ENCODE measurements at regions of chr10 and their contacts with region 1.

Region 1: DNA sequence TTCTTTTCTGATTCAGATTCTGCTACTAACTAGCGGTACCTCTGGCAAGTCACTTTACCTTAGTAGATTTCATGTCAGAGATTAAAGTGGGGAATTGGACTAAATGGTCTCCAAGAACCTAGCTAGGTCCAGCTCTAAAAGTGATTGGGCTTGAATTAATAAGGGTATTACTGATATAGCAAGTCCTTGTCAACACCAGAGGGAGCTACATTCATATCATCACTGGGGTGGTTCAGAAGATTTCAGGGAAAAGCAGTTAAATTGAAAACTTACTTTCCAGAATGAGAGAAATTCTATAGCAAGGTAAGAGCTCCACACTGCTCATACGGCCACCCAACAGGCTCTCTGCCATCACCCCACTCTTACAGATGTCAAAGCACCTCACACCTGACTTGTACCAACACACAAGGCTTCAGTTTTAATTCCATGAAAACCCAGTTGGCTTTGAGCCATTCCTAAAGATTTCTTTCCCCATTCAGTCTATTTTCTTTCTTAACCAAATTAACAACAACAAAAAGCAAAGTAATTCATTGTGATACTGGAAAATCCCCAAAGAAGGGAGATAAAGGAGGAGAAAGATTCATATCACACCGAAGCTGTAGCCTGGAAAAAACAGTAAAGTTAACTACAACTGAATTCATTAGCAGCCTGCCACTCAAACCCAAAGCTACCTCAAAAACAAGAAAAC is 38.0 kb upstream of the SPOCK2 start:
- DNase-seq: peak in 2 of 7 donors; percentile 16 to 30
- H3K4me3 ChIP-seq: no peak overlapping the region
- H3K27ac ChIP-seq: no peak overlapping the region
- H3K4me1 ChIP-seq: peaks cover 4 to 17% of the 10 kb centered on the region in 2 donors
- H3K27me3 ChIP-seq: no peaks in the 10 kb centered on the region
- CTCF ChIP-seq: peak; percentile 18 to 67 (median 54)
- POLR2A ChIP-seq: no peak

Region 2: GRCh38 chr10:72069751-72070526 is 56.4 kb before region 1 on chr10:
- intact Hi-C with region 1: no loop called
- DNase-seq: peak in 1 of 7 donors; percentile 40
- H3K4me3 ChIP-seq: no peak overlapping the region
- H3K27ac ChIP-seq: peak overlapping the region in 3 of 5 donors; percentile 79 to 84 (median 82)
- H3K4me1 ChIP-seq: peaks cover 16 to 37% of the 10 kb centered on the region in 2 donors
- H3K27me3 ChIP-seq: no peaks in the 10 kb centered on the region
- CTCF ChIP-seq: peak in 1 of 6 experiments; percentile 9
- POLR2A ChIP-seq: no peak

Region 3: GRCh38 chr10:72223743-72224101 is 97.4 kb after region 1 on chr10:
- intact Hi-C with region 1: loop called in 1 of 2 experiments (anchors 10 kb)
- DNase-seq: no peak
- H3K4me3 ChIP-seq: peak overlapping the region in 1 of 4 donors; percentile 26
- H3K27ac ChIP-seq: peak overlapping the region; percentile 62 to 90 (median 67)
- H3K4me1 ChIP-seq: peaks cover 21 to 71% of the 10 kb centered on the region in 2 donors
- H3K27me3 ChIP-seq: no peaks in the 10 kb centered on the region
- CTCF ChIP-seq: no peak
- POLR2A ChIP-seq: no peak